ENCODE measurements at regions of chr5 and their contacts with region 1.

Region 1: GRCh38 chr5:149141224-149141956 is at the start of gene ABLIM3:
- DNase-seq: no peak
- H3K4me3 ChIP-seq: peak within 1 kb of the TSS; percentile 74
- CTCF ChIP-seq: peak; percentile 86

Region 2: GRCh38 chr5:148826053-148826738 is 315.2 kb before region 1 on chr5 and contains the start of gene ADRB2:
- CTCF ChIA-PET with region 1: no interaction called
- POLR2A ChIA-PET with region 1: no interaction called
- DNase-seq: peak; percentile 51
- H3K4me3 ChIP-seq: peak within 1 kb of the TSS; percentile 79
- CTCF ChIP-seq: no peak

Region 3: GRCh38 chr5:149128023-149128875 is 13.1 kb before region 1 on chr5:
- CTCF ChIA-PET with region 1: interaction called, 84 read pairs
- POLR2A ChIA-PET with region 1: no interaction called
- DNase-seq: no peak
- H3K4me3 ChIP-seq: no peak overlapping the region
- CTCF ChIP-seq: peak; percentile 86

Region 4: DNA sequence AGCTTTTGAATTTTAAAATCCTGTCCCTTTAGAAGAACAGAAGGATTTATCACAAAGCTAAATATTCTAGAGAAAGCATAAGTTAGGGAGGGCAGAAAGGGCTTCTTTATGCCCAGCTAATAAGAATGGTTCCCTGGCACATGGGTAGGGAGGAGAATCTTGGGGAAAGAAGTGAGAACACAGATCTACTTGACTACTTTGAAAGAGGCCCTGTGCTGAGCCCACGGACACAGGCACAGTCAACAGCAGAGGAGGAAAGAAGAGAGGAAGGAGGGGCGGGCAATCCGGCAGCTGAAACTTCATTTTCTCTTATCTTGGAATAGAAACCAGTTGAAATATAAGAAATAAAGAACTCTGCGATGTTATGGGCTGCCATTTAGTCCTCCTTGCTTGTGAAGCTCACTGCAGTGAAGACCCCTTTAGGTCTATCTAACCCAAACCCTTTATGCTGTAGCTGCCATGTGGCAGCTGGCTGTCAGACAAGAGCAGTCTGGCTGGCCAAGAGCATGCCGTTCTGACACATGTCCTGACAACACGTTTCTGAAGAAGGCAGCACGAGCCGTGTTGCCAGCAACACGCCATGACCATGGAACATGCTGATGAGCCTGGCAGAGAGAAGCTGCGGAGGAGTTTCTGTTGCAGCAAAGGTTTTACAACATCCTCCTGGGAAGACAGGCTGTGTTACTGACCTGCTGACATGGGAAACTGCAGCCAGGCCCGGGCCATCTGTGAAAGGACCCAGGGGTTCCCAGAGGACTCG is 34.1 kb after region 1 on chr5:
- CTCF ChIA-PET with region 1: interaction called, 19 read pairs
- POLR2A ChIA-PET with region 1: no interaction called
- DNase-seq: no peak
- H3K4me3 ChIP-seq: no peak overlapping the region
- CTCF ChIP-seq: no peak

Region 5: DNA sequence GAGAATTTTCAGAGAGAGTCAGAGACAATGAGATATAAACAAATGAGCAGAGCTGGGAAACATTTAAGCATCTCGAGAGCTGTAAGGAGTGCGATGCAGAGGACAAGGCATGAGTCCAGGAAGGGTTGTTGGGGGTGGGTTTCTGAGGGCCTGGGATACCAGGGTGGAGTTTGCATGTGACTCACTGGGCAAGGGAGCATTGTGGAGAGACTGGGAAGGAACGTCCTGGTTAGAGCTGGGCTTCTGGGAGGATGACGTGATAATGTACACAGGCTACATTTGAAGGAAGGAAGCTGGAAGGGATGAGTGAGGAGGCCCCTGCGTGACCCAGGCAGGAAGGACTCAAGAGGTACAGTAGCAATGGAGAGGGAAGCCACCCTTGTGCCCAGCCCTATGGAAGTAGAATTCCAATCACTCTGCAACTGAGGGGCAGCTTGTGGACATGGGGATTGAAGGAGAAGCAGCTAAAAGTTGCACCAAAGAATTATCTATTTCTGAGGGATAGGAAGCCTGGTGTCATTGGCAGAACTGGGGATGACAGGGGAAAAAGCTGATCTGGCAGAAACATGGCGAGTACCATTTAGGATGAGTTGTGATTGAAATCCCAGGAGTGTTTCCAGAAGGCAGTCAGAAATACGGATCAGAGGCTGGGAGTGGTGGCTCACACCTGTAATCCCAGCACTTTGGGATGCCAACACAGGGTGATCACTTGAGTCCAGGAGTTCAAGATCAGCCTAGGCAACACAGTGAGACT is 71.0 kb after region 1 on chr5:
- CTCF ChIA-PET with region 1: interaction called, 41 read pairs
- POLR2A ChIA-PET with region 1: interaction called, 5 read pairs
- DNase-seq: peak; percentile 98
- H3K4me3 ChIP-seq: no peak overlapping the region
- CTCF ChIP-seq: no peak

Region 6: DNA sequence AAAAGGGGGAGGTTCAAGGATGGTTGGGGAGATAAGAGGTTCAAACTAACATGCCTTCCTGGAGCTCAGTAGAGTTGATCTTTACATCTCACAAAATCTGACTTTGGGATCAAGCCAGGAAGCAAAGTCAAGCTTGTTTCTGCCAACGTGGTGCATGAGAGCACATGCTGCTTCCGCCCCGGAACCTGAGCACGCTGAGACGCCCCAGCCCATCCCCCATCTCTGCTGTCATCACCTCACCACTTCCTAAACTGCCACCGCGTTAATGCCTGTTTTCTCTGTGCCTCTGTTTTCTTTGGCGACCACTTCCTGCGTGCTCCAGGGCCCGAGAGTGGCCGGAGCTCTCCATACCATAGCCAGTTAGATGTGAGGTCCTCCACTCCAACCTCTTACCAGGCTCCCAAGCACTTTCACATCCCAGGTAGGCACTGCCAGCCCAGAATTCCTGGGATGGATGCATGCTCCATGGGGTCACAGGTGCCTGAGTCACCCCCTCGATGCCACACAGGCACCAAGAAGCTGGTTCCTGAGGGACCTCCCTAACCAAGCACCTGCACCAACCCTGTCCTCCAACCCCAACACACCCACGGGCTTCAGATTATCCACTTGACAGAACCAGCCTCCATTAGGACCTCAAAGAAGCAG is 99.1 kb after region 1 on chr5:
- CTCF ChIA-PET with region 1: interaction called, 55 read pairs
- POLR2A ChIA-PET with region 1: no interaction called
- DNase-seq: no peak
- H3K4me3 ChIP-seq: no peak overlapping the region
- CTCF ChIP-seq: no peak

Measured in AG04449 (cell line).